GM12878 (cell line): ENCODE measurements at regions of chr6 and their contacts with region 1.

Region 1: DNA sequence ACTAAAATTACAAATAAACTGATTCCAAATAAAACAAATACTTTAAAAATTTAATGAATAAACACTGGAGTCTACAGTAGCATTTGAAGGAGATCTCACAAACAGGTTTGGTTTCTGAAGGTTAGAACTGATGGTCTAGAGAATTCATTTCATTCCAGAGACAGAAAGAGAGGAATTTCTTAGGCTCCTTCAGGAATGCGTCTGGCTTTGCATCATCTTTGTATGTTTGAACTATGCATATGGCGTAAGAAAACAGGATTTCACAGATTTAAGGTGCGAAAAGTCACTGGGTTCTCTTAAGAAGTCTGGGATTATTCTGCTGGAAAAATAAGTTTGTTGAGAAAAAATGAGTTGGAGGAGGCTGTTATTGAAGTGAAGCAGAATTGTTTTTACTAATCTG is 139.9 kb upstream of the DUSP22 start:
- DNase-seq: no peak
- ATAC-seq: no peak
- H3K4me3 ChIP-seq: no peak overlapping the region
- H3K27ac ChIP-seq: no peak overlapping the region; the same call in 1 of the 2 replicates
- H3K4me1 ChIP-seq: peaks cover 55% of the 10 kb centered on the region
- H3K27me3 ChIP-seq: no peaks in the 10 kb centered on the region
- CTCF ChIP-seq: no peak
- EP300 ChIP-seq: no peak
- POLR2A ChIP-seq: no peak
- RAD21 ChIP-seq: no peak

Region 2: DNA sequence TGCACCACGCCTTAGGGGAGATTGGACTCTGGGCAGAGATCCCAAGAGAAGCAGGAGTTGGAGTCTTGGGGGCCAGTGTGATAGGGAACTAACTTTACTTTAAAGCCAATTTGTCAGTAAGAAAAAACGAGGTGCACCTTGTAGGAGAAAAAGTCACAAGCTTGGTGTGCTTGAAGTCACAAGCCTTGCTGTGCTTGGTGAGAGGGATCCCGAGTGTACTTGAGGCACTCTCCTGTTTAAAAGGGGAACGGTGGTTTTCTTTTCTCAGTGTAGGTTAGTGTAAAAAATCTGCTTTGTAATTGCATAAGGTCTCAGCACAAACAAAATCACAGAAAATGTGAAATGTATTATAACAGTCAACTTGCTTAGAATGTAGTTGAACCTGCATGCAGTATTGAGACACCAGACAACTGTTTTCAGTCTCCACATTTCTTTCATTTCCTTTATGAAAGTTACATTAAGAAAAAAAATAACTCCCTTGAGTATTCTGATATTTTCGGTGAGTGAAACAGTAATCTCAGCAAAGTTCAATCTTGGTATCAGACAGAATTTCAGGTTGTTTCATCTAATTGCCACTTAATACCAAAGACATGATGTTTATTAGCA is 28.7 kb after region 1 on chr6:
- CTCF ChIA-PET with region 1: interaction called, 12 read pairs
- POLR2A ChIA-PET with region 1: no interaction called
- RAD21 ChIA-PET with region 1: interaction called, 7 read pairs
- SMC1A ChIA-PET with region 1: interaction called, 12 read pairs
- in situ Hi-C with region 1: no loop called
- intact Hi-C with region 1: no loop called
- DNase-seq: peak; percentile 65
- ATAC-seq: peak; percentile 86
- H3K4me3 ChIP-seq: peak overlapping the region; percentile 19
- H3K27ac ChIP-seq: peak overlapping the region; percentile 82
- H3K4me1 ChIP-seq: peaks cover 29% of the 10 kb centered on the region
- H3K27me3 ChIP-seq: no peaks in the 10 kb centered on the region; a peak in 1 of 4 replicates
- CTCF ChIP-seq: no peak
- EP300 ChIP-seq: peak in 1 of 2 experiments; percentile 65; a peak in 1 of 4 replicates
- POLR2A ChIP-seq: no peak
- RAD21 ChIP-seq: no peak